ENCODE measurements at regions of chr10 and their contacts with region 1.

Region 1: GRCh38 chr10:132536971-132537712 is 445 bp upstream of the INPP5A start:
- DNase-seq: peak; percentile 100
- ATAC-seq: peak; percentile 89
- H3K4me3 ChIP-seq: peak overlapping the region in 4 of 5 experiments; percentile 45 to 75 (median 70)
- H3K4me3 Mint-ChIP-seq: peak overlapping the region; percentile 85
- H3K27ac ChIP-seq: peak overlapping the region; percentile 43 to 79
- H3K27ac Mint-ChIP-seq: peak overlapping the region; percentile 70
- H3K4me1 ChIP-seq: peaks cover 41 to 50% of the 10 kb centered on the region in 2 donors
- H3K4me1 Mint-ChIP-seq: peaks cover 52% of the 10 kb centered on the region
- H3K27me3 ChIP-seq: no peaks in the 10 kb centered on the region
- H3K27me3 Mint-ChIP-seq: no peaks in the 10 kb centered on the region
- CTCF ChIP-seq: peak; percentile 52

Region 2: GRCh38 chr10:132387764-132388210 is 149.4 kb before region 1 on chr10:
- CTCF ChIA-PET with region 1: no interaction called
- POLR2A ChIA-PET with region 1: no interaction called
- intact Hi-C with region 1: loop called (anchors 1 kb)
- DNase-seq: peak; percentile 89
- ATAC-seq: peak; percentile 95
- H3K4me3 ChIP-seq: peak overlapping the region in 4 of 5 experiments; percentile 16 to 47 (median 28)
- H3K4me3 Mint-ChIP-seq: peak overlapping the region; percentile 85
- H3K27ac ChIP-seq: peak overlapping the region; percentile 66 to 72
- H3K27ac Mint-ChIP-seq: peak overlapping the region; percentile 91
- H3K4me1 ChIP-seq: peaks cover 6 to 21% of the 10 kb centered on the region in 2 donors
- H3K4me1 Mint-ChIP-seq: peaks cover 9% of the 10 kb centered on the region
- H3K27me3 ChIP-seq: no peaks in the 10 kb centered on the region
- H3K27me3 Mint-ChIP-seq: no peaks in the 10 kb centered on the region
- CTCF ChIP-seq: peak; percentile 56

Region 3: DNA sequence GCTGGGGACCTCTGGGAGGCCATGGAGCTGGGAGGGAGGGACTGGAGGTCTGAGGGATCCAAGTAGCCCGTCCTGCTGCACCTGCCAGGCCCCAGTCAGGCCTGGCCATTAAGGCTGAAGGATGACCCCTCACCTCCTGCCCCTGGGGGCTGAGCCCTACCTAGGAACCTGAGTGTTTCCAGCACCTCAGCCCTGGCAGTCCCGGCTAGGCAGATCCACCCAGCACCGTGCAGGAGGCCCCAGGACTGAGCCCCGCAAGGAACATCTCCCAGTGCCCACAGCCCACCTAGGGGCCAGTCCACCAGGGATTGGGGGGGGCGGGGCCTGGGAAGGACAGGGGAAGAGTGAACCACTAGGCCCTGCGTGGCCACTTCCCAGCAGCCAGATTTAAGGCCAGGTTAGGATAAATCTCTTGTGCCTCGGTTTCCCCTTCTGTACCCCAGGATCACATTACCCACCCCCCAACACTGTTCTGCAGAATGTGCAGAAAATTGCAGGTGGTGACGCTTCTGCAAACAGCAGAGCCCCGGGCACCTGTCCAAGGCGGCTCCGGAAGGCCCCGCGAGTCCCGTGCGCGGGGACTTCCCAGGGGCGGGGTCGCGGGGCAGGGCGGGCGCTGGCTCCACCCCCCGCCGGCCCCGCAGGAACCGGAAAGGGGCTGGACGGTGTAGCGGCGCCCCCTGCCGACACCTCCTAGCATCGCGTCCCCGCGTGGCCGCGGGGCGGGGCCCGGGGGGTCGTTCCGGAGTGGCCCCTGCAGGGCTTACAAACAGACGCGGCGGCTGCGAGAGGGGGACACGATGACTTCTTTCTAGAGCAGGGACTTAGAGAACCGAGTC is 84.3 kb before region 1 on chr10:
- CTCF ChIA-PET with region 1: no interaction called
- POLR2A ChIA-PET with region 1: no interaction called
- intact Hi-C with region 1: loop called (anchors 2 kb)
- DNase-seq: peak; percentile 95
- ATAC-seq: peak; percentile 92
- H3K4me3 ChIP-seq: peak overlapping the region in 2 of 5 experiments; percentile 21 to 45
- H3K4me3 Mint-ChIP-seq: peak overlapping the region; percentile 64
- H3K27ac ChIP-seq: peak overlapping the region; percentile 83 to 84
- H3K27ac Mint-ChIP-seq: peak overlapping the region; percentile 86
- H3K4me1 ChIP-seq: peaks cover 22 to 35% of the 10 kb centered on the region in 2 donors
- H3K4me1 Mint-ChIP-seq: peaks cover 30% of the 10 kb centered on the region
- H3K27me3 ChIP-seq: no peaks in the 10 kb centered on the region
- H3K27me3 Mint-ChIP-seq: no peaks in the 10 kb centered on the region
- CTCF ChIP-seq: peak; percentile 91

Region 4: GRCh38 chr10:132551093-132551807 is 14.1 kb after region 1 on chr10:
- CTCF ChIA-PET with region 1: interaction called, 23 read pairs
- POLR2A ChIA-PET with region 1: interaction called, 10 read pairs
- intact Hi-C with region 1: loop called (anchors 1 kb)
- DNase-seq: peak; percentile 80
- ATAC-seq: peak; percentile 14
- H3K4me3 ChIP-seq: peak overlapping the region in 4 of 5 experiments; percentile 29 to 51 (median 41)
- H3K4me3 Mint-ChIP-seq: peak overlapping the region; percentile 85
- H3K27ac ChIP-seq: peak overlapping the region; percentile 87 to 88
- H3K27ac Mint-ChIP-seq: peak overlapping the region; percentile 96
- H3K4me1 ChIP-seq: peaks cover 76 to 82% of the 10 kb centered on the region in 2 donors
- H3K4me1 Mint-ChIP-seq: peaks cover 54% of the 10 kb centered on the region
- H3K27me3 ChIP-seq: no peaks in the 10 kb centered on the region
- H3K27me3 Mint-ChIP-seq: no peaks in the 10 kb centered on the region
- CTCF ChIP-seq: no peak

Region 5: DNA sequence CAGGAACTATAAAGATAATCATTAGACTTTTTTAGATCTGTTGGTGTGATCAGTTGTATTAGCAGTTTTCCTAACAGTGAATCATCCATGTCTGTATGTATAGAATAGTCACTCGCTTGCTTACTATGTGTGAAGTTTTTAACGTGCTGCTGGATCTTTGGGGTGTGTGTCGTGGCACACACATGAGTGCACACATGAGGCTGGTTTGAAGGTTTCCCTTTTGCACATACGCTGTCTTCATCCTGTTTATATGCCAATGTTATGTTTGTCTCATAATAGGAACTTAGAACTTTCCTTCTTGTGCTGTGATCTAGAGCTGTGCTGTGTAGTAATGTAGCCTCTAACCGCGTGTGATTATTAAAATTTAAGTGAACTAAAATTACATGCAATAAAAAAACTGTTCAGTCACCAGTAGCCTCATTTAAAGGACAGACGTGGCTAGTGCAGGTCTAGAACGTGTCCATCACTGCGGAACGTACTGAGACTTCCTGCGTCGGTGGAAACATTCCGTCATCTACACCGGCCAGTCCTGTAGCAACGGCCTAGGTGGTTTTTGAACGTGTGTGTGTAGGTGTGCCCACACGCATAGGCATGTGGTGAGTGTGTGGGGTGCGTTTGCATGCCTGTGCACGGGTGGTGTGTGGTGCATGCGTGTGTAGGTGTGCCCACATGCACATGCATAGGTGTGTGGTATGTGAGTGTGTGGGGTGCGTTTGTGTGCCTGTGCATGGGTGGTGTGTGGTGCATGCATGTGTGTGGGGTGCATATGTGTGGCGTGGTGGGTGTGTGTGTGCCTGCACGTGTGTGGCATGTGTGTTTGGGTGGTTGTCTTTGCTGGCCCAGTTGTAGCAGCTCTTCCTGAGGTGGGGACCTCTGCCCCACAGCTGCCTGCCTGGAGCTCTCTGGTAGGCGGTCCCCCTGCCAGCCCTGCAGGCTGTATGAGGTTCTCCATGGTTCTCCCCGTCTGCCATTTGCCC is 57.0 kb after region 1 on chr10:
- CTCF ChIA-PET with region 1: no interaction called
- POLR2A ChIA-PET with region 1: no interaction called
- intact Hi-C with region 1: loop called (anchors 1 kb)
- DNase-seq: peak; percentile 78
- ATAC-seq: peak; percentile 72
- H3K4me3 ChIP-seq: peak overlapping the region in 3 of 5 experiments; percentile 25 to 60 (median 35)
- H3K4me3 Mint-ChIP-seq: peak overlapping the region; percentile 78
- H3K27ac ChIP-seq: peak overlapping the region; percentile 90 to 92
- H3K27ac Mint-ChIP-seq: peak overlapping the region; percentile 93
- H3K4me1 ChIP-seq: peaks cover 50 to 61% of the 10 kb centered on the region in 2 donors
- H3K4me1 Mint-ChIP-seq: peaks cover 88% of the 10 kb centered on the region
- H3K27me3 ChIP-seq: no peaks in the 10 kb centered on the region
- H3K27me3 Mint-ChIP-seq: no peaks in the 10 kb centered on the region
- CTCF ChIP-seq: no peak

Region 6: DNA sequence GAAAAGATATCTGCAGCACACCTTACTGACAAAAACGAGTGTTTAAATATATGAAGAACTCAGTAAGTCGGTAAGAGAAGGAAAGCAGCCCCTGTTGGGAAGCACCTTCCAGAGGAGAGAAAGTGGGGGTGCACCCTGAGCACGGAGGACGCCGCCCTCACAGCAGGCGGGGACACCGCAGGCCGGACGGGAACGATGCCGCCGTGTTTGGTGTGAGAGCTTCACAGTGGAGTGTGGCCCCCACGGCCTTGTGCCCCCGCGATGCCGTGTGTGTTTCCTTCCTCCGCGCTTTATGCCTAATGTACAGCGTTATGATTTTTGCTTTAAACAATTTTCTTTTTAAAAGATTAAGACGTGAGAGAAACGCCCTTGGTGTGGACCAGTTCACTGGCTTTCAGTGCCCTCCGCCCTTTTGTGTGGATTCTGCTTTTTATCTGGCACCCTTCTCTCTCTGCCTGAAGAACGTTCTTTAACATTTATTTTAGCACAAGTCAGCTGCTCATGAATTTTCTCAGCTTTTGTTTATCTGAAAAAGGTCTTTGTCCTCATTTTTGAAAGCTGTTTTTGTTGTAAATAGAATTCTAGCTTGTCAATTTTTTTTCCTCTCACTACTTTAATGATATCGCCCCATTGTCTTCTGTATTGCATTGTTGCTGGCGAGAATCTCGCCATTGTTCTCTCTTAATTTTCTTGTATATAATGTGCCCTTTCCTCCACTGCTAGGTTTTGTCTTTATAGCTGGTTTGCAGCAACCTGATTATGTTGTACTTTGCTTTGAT is 111.1 kb after region 1 on chr10:
- CTCF ChIA-PET with region 1: no interaction called
- POLR2A ChIA-PET with region 1: no interaction called
- intact Hi-C with region 1: no loop called
- DNase-seq: no peak
- ATAC-seq: no peak
- H3K4me3 ChIP-seq: no peak overlapping the region
- H3K4me3 Mint-ChIP-seq: no peak overlapping the region
- H3K27ac ChIP-seq: no peak overlapping the region
- H3K27ac Mint-ChIP-seq: no peak overlapping the region
- H3K4me1 ChIP-seq: peaks cover 0 to 9% of the 10 kb centered on the region in 2 donors
- H3K4me1 Mint-ChIP-seq: peaks cover 9% of the 10 kb centered on the region
- H3K27me3 ChIP-seq: no peaks in the 10 kb centered on the region
- H3K27me3 Mint-ChIP-seq: no peaks in the 10 kb centered on the region
- CTCF ChIP-seq: no peak

Region 7: DNA sequence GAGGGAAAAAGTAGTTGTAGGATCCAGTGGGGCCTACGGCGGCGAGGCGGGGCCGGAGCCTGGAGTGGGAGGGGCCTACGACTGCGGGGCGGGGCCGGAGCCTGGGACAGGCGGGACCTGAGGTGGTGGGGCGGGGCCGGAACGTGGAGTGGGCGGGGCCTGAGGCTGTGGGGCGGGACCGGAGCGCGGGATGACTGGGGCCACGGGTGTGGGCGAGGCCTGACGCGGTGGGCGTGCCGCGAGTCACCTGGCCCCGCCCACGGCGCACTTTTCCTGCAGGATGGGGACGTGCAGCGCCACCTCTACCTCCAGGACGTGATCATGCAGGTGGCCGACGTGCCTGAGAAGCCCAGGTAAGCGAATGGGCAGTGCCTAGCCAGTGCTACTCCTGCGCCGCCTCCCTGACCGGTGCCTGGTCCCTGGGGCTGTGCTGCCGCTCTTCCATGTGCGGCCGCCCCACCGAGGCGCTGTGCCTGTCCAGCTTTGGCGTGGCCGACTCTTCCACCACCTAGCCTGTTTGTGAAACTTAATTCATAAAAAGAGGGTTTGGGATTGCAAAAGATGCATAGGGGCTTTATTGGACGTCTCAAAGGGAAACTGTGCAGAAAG is 772.1 kb after region 1 on chr10:
- CTCF ChIA-PET with region 1: no interaction called
- POLR2A ChIA-PET with region 1: no interaction called
- intact Hi-C with region 1: loop called (anchors 5 kb)
- DNase-seq: no peak
- ATAC-seq: peak; percentile 90
- H3K4me3 ChIP-seq: peak overlapping the region in 4 of 5 experiments; percentile 73 to 94 (median 92)
- H3K4me3 Mint-ChIP-seq: peak overlapping the region; percentile 78
- H3K27ac ChIP-seq: peak overlapping the region; percentile 96 to 97
- H3K27ac Mint-ChIP-seq: peak overlapping the region; percentile 88
- H3K4me1 ChIP-seq: peaks cover 21 to 41% of the 10 kb centered on the region in 2 donors
- H3K4me1 Mint-ChIP-seq: peaks cover 37% of the 10 kb centered on the region
- H3K27me3 ChIP-seq: no peaks in the 10 kb centered on the region
- H3K27me3 Mint-ChIP-seq: no peaks in the 10 kb centered on the region
- CTCF ChIP-seq: no peak

Measured in B cell (primary cell).